AG04450 (cell line): ENCODE measurements at regions of chr10 and their contacts with region 1.

Region 1: GRCh38 chr10:67697724-67698131 is 1.7 kb upstream of the CTNNA3 start:
- DNase-seq: peak; percentile 20
- H3K4me3 ChIP-seq: no peak overlapping the region
- H3K27ac ChIP-seq: no peak overlapping the region
- H3K27me3 ChIP-seq: peaks cover 3% of the 10 kb centered on the region
- CTCF ChIP-seq: peak; percentile 78

Region 2: GRCh38 chr10:67452892-67453291 is 244.8 kb before region 1 on chr10:
- CTCF ChIA-PET with region 1: no interaction called
- POLR2A ChIA-PET with region 1: no interaction called
- DNase-seq: no peak
- H3K4me3 ChIP-seq: no peak overlapping the region
- H3K27ac ChIP-seq: no peak overlapping the region
- H3K27me3 ChIP-seq: no peaks in the 10 kb centered on the region
- CTCF ChIP-seq: no peak

Region 3: DNA sequence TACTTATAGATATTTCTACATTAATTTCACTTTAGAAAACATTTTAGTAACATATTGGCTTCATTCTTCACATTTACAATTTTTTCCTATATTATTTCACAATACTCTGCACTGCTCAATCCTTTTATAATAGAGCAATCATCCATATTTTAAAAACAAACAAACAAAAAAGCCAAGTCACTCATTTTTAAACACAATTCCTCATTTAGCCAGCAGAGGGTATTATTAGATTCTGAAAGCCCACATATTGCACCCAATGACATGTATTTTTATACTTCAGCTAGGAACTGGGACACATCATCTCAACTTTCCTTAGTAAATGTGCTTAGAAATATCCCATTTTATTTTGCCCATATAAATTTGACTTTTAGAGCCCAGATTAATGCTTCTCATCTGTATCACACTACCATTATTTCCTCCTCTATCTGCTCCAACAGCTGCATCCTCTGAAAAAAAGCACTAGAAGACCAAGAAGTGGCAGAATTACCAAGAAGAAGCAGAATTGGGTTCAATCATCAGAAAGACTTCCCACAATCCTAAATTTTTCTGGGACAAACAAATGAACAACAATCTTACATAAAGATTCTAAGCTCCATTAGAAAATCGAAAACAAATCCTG is 31.2 kb before region 1 on chr10:
- CTCF ChIA-PET with region 1: interaction called, 25 read pairs
- POLR2A ChIA-PET with region 1: no interaction called
- DNase-seq: no peak
- H3K4me3 ChIP-seq: no peak overlapping the region
- H3K27ac ChIP-seq: no peak overlapping the region
- H3K27me3 ChIP-seq: no peaks in the 10 kb centered on the region
- CTCF ChIP-seq: peak; percentile 58

Region 4: DNA sequence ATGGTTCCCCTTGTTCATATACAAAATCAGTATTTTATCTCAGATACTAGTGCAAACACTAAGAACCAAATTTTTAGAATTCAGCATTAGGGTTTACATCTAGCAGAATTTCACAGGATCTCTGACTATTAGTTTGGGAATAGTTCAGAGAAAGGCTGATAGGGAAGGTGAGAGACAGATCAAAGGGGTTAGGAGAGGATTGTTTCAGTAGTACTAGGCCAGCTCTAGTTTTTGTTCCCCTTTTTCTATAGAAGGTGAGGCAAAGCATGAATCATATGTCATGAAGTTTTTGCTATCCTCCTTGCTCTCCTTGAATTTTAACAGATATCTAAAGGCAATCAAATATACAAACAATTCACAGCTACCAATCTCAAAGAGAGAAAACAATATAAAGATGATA is 24.4 kb after region 1 on chr10:
- CTCF ChIA-PET with region 1: interaction called, 11 read pairs
- POLR2A ChIA-PET with region 1: no interaction called
- DNase-seq: no peak
- H3K4me3 ChIP-seq: no peak overlapping the region
- H3K27ac ChIP-seq: no peak overlapping the region
- H3K27me3 ChIP-seq: no peaks in the 10 kb centered on the region
- CTCF ChIP-seq: no peak

Region 5: DNA sequence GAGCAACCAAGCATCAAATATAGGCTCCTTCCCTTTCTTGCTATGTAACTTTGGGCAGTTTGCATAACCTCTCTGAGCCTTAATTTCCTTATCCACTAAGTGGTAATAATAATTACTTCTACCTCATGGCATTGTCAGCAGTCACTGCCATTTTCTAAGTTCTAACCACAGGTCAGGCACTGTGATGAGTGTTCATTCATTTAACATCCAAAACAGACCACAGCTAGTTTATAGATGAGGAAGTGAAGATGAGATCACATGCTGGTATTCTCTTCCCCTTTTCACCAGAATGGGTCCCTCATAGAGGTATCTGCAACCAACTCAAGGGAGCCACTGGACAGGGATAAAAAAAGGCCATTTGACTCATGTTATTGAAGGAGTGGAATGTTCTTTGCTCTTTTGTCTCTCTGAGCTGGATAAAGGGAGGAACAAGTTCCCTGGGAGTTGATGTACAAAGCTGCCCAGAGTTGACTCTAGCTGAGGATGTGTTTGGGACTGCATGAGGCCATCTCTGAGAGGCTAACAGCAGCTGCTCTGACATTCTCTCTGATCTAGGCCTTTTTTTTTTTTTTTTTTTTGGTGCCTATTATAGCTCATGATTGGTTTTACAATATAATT is 75.3 kb after region 1 on chr10:
- CTCF ChIA-PET with region 1: interaction called, 187 read pairs
- POLR2A ChIA-PET with region 1: no interaction called
- DNase-seq: peak; percentile 18
- H3K4me3 ChIP-seq: no peak overlapping the region
- H3K27ac ChIP-seq: no peak overlapping the region
- H3K27me3 ChIP-seq: no peaks in the 10 kb centered on the region
- CTCF ChIP-seq: no peak

Region 6: GRCh38 chr10:67788025-67788886 is 90.5 kb after region 1 on chr10:
- CTCF ChIA-PET with region 1: interaction called, 16 read pairs
- POLR2A ChIA-PET with region 1: no interaction called
- DNase-seq: no peak
- H3K4me3 ChIP-seq: no peak overlapping the region
- H3K27ac ChIP-seq: no peak overlapping the region
- H3K27me3 ChIP-seq: peaks cover 2% of the 10 kb centered on the region
- CTCF ChIP-seq: peak; percentile 51